ENCODE measurements at regions of chr16 and their contacts with region 1.

Region 1: GRCh38 chr16:69396187-69397061 is 10.6 kb upstream of the TERF2 start:
- DNase-seq: peak; percentile 87
- H3K4me3 Mint-ChIP-seq: no peak overlapping the region
- H3K27ac Mint-ChIP-seq: peak overlapping the region; percentile 62
- H3K4me1 Mint-ChIP-seq: peaks cover 20% of the 10 kb centered on the region
- H3K27me3 Mint-ChIP-seq: peaks cover 4% of the 10 kb centered on the region

Region 2: GRCh38 chr16:68689925-68690324 is 706.5 kb before region 1 on chr16:
- CTCF ChIA-PET with region 1: no interaction called
- intact Hi-C with region 1: no loop called
- DNase-seq: peak; percentile 20
- H3K4me3 Mint-ChIP-seq: no peak overlapping the region
- H3K27ac Mint-ChIP-seq: no peak overlapping the region
- H3K4me1 Mint-ChIP-seq: no peaks in the 10 kb centered on the region
- H3K27me3 Mint-ChIP-seq: no peaks in the 10 kb centered on the region

Region 3: GRCh38 chr16:69424053-69424934 is 27.9 kb after region 1 on chr16 and contains the start of gene CYB5B:
- CTCF ChIA-PET with region 1: interaction called, 4 read pairs
- intact Hi-C with region 1: loop called (anchors 1 kb)
- DNase-seq: peak; percentile 99
- H3K4me3 Mint-ChIP-seq: peak within 1 kb of the TSS; percentile 95
- H3K27ac Mint-ChIP-seq: peak within 1 kb of the TSS; percentile 93
- H3K4me1 Mint-ChIP-seq: peaks cover 40% of the 10 kb centered on the region
- H3K27me3 Mint-ChIP-seq: no peaks in the 10 kb centered on the region
- total RNA-seq, gene CYB5B: 160 to 172 TPM

Region 4: DNA sequence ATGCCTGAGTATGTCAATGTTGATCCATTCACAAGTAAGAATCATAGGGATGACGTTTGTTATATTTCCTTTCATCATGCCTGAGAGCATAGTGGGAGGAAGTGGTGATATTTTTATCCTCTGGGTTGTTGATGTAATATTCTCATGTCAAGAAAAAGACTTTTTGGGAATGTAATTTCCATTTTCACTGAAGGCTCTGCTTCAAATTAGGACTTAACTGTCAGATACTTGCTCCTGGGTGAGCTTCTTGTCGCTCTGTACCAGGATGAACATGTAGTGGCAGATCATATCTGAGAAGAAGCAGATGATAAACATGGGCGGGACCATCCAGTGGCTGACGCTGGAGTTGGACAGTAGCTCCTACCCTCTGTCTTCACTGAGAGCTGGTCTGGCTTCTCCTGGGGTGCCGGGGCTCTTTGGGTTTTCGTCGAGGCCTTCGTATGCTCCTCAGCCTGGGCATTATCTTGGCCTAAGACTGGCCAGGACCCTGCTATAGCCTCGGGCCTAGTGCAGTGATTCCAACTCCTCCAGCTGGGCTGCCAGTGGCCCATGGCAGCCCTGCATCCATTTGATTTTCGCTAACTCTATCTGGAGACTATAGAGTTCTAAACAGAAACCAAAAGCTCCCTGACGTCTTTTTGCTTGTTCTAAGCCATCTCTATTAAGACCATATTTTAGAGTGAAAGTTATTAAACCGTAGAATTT is 47.7 kb after region 1 on chr16:
- CTCF ChIA-PET with region 1: interaction called, 4 read pairs
- intact Hi-C with region 1: loop called (anchors 1 kb)
- DNase-seq: peak; percentile 26
- H3K4me3 Mint-ChIP-seq: peak overlapping the region; percentile 66
- H3K27ac Mint-ChIP-seq: peak overlapping the region; percentile 89
- H3K4me1 Mint-ChIP-seq: peaks cover 43% of the 10 kb centered on the region
- H3K27me3 Mint-ChIP-seq: no peaks in the 10 kb centered on the region

Region 5: DNA sequence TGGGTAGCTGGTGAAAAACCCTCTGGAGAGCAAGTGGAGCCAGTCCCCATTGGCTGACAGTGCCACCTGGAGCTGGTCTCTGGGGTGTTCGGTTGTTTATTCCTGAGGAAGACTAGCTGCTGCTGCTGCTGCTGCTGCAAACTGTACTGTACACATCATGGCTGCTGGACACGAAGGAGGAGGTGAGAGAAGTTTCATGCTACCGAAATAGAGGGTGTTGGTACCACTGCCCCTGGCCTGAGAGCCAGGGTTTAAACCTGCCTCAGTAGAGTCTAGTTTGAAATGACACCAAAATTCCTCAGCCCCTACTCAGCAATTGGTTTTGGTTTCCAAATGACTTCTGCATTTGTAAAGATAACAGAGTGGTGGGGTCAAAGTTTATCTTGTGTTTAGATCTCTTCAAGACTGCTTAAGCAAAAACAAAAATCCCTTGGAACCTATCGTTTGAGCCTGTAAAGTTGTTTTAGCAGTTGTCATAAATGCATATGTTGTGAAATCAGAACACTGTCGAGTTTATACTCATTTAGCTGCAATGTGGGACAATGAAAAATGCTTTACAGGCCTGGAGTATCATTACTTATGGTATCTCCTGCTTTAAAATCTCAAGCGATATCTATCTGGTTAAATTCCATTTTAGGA is 68.8 kb after region 1 on chr16:
- CTCF ChIA-PET with region 1: interaction called, 7 read pairs
- intact Hi-C with region 1: loop called (anchors 5 kb)
- DNase-seq: peak; percentile 28
- H3K4me3 Mint-ChIP-seq: no peak overlapping the region
- H3K27ac Mint-ChIP-seq: no peak overlapping the region
- H3K4me1 Mint-ChIP-seq: peaks cover 43% of the 10 kb centered on the region
- H3K27me3 Mint-ChIP-seq: no peaks in the 10 kb centered on the region

Region 6: DNA sequence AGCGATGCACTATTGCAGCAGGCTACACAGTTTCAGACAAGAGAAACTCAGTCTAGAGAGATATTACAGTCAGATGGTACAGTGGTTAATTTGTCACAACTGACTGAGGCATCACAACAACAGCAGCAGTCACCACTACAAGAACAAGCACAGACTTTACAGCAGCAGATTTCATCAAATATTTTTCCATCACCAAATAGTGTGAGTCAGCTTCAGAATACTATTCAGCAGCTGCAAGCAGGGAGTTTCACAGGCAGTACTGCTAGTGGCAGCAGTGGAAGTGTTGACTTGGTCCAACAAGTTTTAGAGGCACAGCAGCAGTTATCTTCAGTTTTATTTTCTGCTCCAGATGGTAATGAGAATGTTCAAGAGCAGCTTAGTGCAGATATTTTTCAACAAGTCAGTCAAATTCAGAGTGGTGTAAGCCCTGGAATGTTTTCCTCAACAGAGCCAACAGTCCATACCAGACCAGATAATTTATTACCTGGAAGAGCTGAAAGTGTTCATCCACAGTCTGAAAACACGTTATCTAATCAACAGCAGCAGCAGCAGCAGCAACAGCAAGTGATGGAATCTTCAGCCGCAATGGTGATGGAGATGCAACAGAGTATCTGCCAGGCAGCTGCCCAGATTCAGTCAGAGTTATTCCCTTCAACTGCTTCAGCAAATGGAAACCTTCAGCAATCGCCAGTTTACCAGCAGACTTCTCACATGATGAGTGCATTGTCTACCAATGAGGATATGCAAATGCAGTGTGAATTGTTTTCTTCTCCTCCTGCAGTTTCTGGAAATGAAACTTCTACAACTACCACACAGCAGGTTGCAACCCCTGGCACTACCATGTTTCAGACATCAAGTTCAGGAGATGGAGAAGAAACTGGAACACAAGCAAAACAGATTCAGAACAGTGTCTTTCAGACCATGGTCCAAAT is 295.8 kb after region 1 on chr16:
- CTCF ChIA-PET with region 1: interaction called, 3 read pairs
- intact Hi-C with region 1: loop called (anchors 5 kb)
- DNase-seq: peak; percentile 37
- H3K4me3 Mint-ChIP-seq: no peak overlapping the region
- H3K27ac Mint-ChIP-seq: peak overlapping the region; percentile 80
- H3K4me1 Mint-ChIP-seq: peaks cover 14% of the 10 kb centered on the region
- H3K27me3 Mint-ChIP-seq: no peaks in the 10 kb centered on the region

Region 7: DNA sequence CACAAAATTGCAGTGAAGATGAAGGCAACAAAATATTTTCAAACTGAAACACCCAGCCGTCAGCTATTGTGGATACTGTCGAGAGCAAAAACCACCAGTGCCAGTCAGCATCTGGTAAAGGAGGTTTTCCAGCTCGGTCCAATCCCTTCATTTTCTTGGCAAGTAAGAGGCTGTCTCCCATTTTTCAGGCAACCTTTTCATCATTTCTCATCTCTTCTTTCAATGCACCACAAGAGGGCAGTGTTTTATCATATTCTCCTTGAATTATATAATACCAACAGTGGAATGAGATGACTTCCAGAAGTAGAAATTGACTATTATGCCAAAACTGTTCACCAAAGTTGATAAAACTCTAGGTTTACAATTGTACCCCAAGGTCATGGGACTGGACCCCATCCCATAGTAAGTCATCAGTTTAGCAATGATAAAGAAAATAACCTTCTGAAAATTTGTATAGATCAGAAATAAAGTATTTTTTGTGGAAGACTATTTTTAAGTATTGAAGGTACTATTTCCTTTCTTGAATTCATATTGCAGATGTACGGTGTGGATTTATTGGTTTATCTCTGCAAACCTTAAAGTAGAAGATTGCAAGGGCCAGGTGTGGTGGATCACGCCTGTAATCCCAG is 313.1 kb after region 1 on chr16:
- CTCF ChIA-PET with region 1: interaction called, 3 read pairs
- intact Hi-C with region 1: loop called (anchors 5 kb)
- DNase-seq: no peak
- H3K4me3 Mint-ChIP-seq: no peak overlapping the region
- H3K27ac Mint-ChIP-seq: no peak overlapping the region
- H3K4me1 Mint-ChIP-seq: peaks cover 8% of the 10 kb centered on the region
- H3K27me3 Mint-ChIP-seq: no peaks in the 10 kb centered on the region